ENCODE measurements at regions of chr13 and their contacts with region 1.

Region 1: GRCh38 chr13:97221989-97222700 is at the start of gene MBNL2:
- DNase-seq: peak; percentile 97
- H3K4me3 ChIP-seq: peak within 1 kb of the TSS; percentile 50 to 86 (median 85)
- H3K27ac ChIP-seq: peak within 1 kb of the TSS; percentile 97
- H3K4me1 ChIP-seq: peaks cover 39% of the 10 kb centered on the region
- H3K27me3 ChIP-seq: no peaks in the 10 kb centered on the region
- CTCF ChIP-seq: no peak
- total RNA-seq, gene MBNL2: 37.5 to 125 TPM

Region 2: DNA sequence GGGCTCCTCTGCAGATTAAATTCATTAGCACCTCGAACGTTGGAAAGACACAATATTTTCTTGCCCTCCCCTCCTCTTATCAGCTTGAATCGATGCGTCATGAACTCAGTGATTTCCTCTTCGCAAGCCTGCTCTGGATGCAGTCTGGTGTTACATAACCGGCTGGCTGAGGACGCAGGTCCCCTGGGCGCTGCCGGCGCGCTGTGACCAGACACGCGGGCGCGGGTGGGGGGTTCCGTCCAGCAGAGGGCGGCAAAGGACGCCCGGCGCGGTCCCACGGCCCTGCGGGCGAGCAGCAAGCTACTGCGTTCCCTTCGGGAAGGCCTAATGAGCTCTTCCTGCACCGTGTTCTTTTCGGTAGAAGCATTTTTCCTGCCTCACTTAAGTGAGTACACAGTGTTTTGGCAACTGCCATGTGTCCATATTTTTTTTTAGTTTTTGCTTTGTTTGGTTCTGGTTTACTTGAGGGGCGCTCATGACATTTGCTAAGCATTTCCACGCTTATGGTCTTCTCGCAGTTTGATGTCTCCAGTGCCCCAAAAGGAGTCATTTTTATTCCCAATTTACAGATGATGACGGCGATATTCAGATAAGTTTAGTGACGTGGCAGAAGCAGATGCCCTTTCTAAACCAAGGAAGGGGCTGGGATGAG is 112.2 kb before region 1 on chr13:
- CTCF ChIA-PET with region 1: interaction called, 11 read pairs
- dilution Hi-C with region 1: no loop called
- in situ Hi-C with region 1: no loop called
- intact Hi-C with region 1: no loop called
- DNase-seq: peak; percentile 85
- H3K4me3 ChIP-seq: no peak overlapping the region
- H3K27ac ChIP-seq: no peak overlapping the region
- H3K4me1 ChIP-seq: peaks cover 16% of the 10 kb centered on the region
- H3K27me3 ChIP-seq: no peaks in the 10 kb centered on the region
- CTCF ChIP-seq: peak; percentile 62 to 95

Region 3: DNA sequence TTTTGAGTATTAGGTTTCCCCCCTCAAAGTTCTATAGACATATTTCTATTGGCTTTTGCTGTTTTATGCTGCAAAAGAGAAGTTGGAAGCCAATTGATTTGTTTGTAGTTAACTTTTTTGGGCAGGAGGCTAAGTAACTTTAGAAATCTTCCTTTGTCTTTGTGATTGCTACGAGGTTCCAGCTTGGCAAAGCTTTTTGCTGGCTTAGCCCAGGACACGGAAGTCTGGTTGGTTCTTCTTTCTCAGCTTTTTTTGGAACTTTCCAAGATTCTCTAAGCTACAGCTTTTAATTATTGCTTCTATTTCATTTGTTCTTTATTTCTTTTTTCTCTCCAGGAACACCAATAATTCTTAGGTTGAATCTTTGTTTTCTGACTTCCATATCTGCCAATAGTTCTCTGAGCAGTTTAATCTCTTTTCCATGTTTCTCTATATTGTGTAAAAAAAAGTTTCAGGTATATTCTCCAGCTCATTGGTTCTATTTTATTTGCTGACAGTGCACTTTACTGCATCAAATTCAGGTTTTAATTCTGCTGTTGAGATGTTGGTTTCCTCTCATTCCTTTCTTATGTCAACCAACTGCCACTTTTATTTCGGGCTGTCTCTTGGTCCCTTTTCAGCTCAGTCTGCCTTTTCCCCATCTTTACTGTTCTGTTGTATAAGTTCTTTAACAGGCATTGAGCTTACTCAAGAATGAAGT is 27.8 kb after region 1 on chr13:
- CTCF ChIA-PET with region 1: interaction called, 10 read pairs
- dilution Hi-C with region 1: no loop called
- in situ Hi-C with region 1: no loop called
- intact Hi-C with region 1: loop called (anchors 2 kb)
- DNase-seq: no peak
- H3K4me3 ChIP-seq: peak overlapping the region in 2 of 3 experiments; percentile 33 to 41
- H3K27ac ChIP-seq: peak overlapping the region; percentile 80
- H3K4me1 ChIP-seq: peaks cover 39% of the 10 kb centered on the region
- H3K27me3 ChIP-seq: no peaks in the 10 kb centered on the region
- CTCF ChIP-seq: no peak

Region 4: DNA sequence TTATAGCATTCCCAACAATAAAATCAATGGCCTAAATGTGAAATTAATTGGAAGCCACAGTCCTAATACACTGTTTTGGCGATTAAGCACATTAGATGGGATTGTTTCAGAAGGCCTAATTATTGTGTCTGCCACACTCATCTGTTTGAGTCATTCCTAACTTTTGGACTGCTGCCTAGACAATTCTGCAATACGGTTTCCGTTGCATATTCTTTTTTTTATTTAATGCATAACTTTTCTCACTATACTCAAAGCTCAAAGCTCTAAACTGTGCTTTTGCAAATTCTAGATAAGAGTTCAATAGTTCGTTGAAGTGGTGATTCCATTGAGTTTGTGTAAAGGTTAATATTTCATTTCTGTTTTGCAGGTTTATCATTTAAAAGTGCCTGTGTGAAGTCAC is 53.1 kb after region 1 on chr13:
- CTCF ChIA-PET with region 1: no interaction called
- dilution Hi-C with region 1: no loop called
- in situ Hi-C with region 1: no loop called
- intact Hi-C with region 1: loop called (anchors 1 kb)
- DNase-seq: peak; percentile 79
- H3K4me3 ChIP-seq: peak overlapping the region in 1 of 3 experiments; percentile 13
- H3K27ac ChIP-seq: peak overlapping the region; percentile 97
- H3K4me1 ChIP-seq: peaks cover 74% of the 10 kb centered on the region
- H3K27me3 ChIP-seq: no peaks in the 10 kb centered on the region
- CTCF ChIP-seq: no peak

Region 5: GRCh38 chr13:97288486-97288900 is 66.3 kb after region 1 on chr13:
- CTCF ChIA-PET with region 1: no interaction called
- dilution Hi-C with region 1: no loop called
- in situ Hi-C with region 1: no loop called
- intact Hi-C with region 1: no loop called
- DNase-seq: no peak
- H3K4me3 ChIP-seq: no peak overlapping the region
- H3K27ac ChIP-seq: no peak overlapping the region
- H3K4me1 ChIP-seq: peaks cover 8% of the 10 kb centered on the region
- H3K27me3 ChIP-seq: no peaks in the 10 kb centered on the region
- CTCF ChIP-seq: no peak

Region 6: GRCh38 chr13:97344265-97345175 is 122.4 kb after region 1 on chr13:
- CTCF ChIA-PET with region 1: no interaction called
- dilution Hi-C with region 1: no loop called
- in situ Hi-C with region 1: loop called in 1 of 2 experiments (anchors 25 kb)
- intact Hi-C with region 1: loop called (anchors 1 kb)
- DNase-seq: peak; percentile 49
- H3K4me3 ChIP-seq: no peak overlapping the region
- H3K27ac ChIP-seq: no peak overlapping the region
- H3K4me1 ChIP-seq: peaks cover 4% of the 10 kb centered on the region
- H3K27me3 ChIP-seq: no peaks in the 10 kb centered on the region
- CTCF ChIP-seq: peak; percentile 74 to 76

Region 7: DNA sequence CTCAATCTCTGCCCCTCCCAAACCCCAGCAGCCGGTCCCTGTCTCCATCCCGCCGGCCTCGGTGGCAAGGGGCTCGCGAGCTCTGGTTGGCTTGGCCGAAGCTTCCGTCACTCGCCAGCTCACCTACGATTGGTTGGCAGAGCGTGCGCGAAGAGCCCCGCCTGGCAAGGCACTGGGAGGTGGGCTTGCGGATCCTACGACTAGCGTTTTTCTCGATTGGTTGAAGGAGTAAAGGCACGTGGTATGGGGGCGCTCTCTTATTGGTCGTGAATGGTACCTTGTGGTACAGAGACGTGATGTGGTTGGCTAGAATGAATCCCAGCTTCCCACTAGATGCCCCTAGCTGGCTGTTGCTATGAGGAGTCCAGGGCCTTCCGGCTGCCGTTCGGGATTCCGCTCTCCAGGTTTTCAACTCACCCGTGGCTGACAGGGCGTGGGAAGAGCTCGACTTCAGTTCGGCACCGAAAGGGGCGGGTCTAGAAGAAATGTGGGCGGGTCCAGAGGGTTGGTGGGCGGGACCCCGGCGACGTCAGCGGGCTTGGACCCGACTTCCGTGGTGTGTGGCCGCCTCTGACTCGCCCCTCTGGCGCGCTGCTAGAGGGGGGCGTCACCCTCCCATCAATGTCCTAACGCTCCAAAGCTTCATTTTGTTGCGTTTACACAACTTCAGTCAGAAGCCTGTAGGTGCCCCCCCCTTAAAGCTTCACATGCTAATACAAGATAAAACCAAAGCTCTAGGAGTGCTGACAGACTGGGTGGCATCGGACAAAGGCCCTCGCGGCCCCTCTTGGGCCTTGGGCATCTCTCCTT is 211.0 kb after region 1 on chr13:
- CTCF ChIA-PET with region 1: interaction called, 5 read pairs
- dilution Hi-C with region 1: loop called (anchors 10 kb)
- in situ Hi-C with region 1: no loop called
- intact Hi-C with region 1: loop called (anchors 2 kb)
- DNase-seq: peak; percentile 100
- H3K4me3 ChIP-seq: peak overlapping the region; percentile 69 to 96 (median 93)
- H3K27ac ChIP-seq: peak overlapping the region; percentile 98
- H3K4me1 ChIP-seq: peaks cover 5% of the 10 kb centered on the region
- H3K27me3 ChIP-seq: no peaks in the 10 kb centered on the region
- CTCF ChIP-seq: no peak

Measured in mammary epithelial cell (primary cell).